Aorta (tissue), 5 donors: ENCODE measurements at regions of chr4 and their contacts with region 1.

Region 1: GRCh38 chr4:38867478-38868058 is at the start of gene FAM114A1:
- DNase-seq: peak; percentile 92 to 95
- ATAC-seq: peak; percentile 97
- H3K4me3 ChIP-seq: peak within 1 kb of the TSS; percentile 94 to 96
- H3K27ac ChIP-seq: peak within 1 kb of the TSS; percentile 85 to 98
- H3K4me1 ChIP-seq: peaks cover 4 to 5% of the 10 kb centered on the region in 2 donors
- H3K27me3 ChIP-seq: no peaks in the 10 kb centered on the region
- total RNA-seq, gene FAM114A1: 104 to 123 TPM

Region 2: GRCh38 chr4:38424151-38424871 is 443.3 kb before region 1 on chr4:
- intact Hi-C with region 1: no loop called
- DNase-seq: no peak
- ATAC-seq: no peak
- H3K4me3 ChIP-seq: no peak overlapping the region
- H3K27ac ChIP-seq: no peak overlapping the region
- H3K4me1 ChIP-seq: no peaks in the 10 kb centered on the region
- H3K27me3 ChIP-seq: peaks cover 0 to 4% of the 10 kb centered on the region in 2 donors

Region 3: DNA sequence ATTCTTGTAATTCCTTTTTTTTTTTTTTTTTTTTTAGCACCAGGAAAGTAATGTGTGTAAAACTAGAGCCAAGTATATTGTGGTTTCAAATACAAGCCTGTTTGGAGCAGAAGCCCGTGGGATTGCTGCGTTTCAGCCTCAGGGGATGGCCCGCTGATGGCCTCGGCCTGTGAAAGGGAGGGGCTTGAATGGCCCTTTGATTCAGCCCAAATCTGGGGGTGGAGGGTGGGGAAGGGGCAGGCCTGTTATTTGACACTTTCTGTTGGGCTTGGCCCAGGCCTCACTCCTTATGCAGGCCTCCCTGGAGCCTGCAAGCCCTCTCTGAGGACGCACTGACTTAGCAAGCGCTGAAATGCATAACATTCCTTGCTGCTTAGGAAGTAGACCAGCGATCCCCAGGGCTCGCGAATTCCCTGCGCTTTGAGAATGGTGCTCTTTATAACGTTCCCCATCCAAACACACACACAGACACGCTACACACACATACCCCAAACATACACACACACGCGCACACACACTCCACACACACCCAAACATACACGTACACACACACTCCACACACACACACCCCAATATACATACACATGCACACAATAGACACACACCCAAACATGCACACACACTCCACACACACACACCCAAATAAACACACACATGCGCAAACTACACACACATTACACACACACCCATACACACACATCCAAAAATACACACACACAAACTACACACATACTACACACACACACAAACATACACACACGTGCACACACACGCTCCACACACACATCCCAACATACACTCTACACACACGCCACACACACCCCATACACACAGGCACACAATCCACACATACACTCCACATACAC is 114.4 kb before region 1 on chr4:
- intact Hi-C with region 1: loop called in 1 of 2 experiments (anchors 5 kb)
- DNase-seq: peak; percentile 88 to 92
- ATAC-seq: peak; percentile 93
- H3K4me3 ChIP-seq: no peak overlapping the region
- H3K27ac ChIP-seq: peak overlapping the region in 1 of 2 donors; percentile 81
- H3K4me1 ChIP-seq: peaks cover 0 to 5% of the 10 kb centered on the region in 2 donors
- H3K27me3 ChIP-seq: no peaks in the 10 kb centered on the region